ENCODE measurements at regions of chr4 and their contacts with region 1.

Region 1: GRCh38 chr4:173642509-173642908 is 112.5 kb upstream of the HAND2 start:
- DNase-seq: no peak

Region 2: DNA sequence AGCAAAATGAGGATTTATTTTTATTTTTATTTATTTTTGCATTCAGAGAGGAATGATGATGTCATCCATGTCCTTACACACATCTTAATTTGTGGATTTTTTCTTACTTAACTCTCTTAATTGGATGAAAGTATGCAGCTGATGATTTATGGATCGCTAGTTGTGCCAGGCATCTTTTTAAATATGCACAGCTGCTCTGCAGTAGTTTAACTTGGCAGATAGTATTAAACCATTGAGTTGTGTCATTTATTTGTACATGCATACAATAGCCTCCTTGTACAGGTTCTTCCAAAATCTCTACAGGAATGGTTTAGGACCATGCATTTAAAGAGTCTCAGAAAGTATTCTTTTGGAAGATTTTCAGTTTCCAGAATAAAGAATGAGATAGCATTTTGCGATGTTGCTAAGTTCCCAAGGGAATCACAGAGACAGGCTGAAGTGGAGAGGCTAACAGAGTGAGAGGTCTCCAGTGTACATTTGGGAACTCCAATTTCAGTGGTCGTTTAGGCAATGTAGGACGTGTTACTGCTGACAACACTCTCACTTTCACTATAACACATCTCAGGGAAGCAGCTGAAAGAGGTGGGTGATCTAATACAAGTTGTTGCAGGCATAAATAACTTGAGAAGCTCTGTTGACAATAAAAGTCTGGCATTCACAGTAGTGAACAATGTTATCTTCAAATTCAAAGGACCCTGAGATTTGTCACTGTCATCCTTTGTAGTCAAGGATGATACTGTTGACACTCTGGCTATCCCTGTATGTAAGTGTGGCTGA is 193.7 kb before region 1 on chr4:
- intact Hi-C with region 1: no loop called
- DNase-seq: no peak

Region 3: DNA sequence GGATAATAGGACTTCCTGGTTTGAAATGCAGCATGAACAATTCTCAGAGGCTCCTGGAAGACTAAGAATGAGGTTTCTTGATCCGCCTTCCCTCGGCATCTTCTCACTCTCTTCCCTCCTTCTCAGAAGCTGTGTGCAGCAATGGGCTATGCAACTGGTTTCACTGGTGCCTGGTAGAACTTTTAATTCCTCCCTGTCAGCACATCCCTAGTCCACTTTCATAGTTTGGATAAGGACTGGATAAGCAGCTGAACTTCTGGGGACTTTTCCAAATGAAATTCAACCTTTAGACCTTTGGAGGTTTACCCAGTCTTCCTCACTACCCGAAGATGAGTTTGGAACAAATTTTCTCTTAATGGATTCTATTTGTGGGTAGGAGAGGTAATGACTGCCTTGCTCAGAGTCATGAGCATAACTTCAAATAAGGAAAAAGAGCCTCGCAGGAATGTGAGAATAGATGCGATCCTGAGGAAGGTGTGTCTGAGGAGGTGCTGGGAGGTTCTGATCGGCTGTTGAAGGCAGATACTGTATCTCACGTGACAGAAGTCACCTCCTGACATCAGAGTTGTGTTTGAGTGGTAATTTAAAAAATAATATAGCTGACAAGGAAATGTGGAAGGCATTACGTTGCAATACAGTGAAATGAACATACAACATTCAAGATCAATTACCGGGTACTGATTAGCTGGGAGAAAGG is 56.5 kb before region 1 on chr4:
- intact Hi-C with region 1: loop called (anchors 5 kb)
- DNase-seq: no peak

Region 4: GRCh38 chr4:174292473-174292872 is 650.0 kb after region 1 on chr4:
- intact Hi-C with region 1: no loop called
- DNase-seq: no peak